Activated naive CD4-positive, alpha-beta T cell treated with anti-CD3 and anti-CD28 coated beads for 36 hours (primary cell): ENCODE measurements at regions of chr11 and their contacts with region 1.

Region 1: GRCh38 chr11:64778508-64779346 is at the start of gene SF1:
- DNase-seq: peak; percentile 100
- H3K4me3 Mint-ChIP-seq: peak within 1 kb of the TSS; percentile 92
- H3K27ac Mint-ChIP-seq: peak within 1 kb of the TSS; percentile 99
- H3K4me1 Mint-ChIP-seq: peaks cover 52% of the 10 kb centered on the region
- H3K27me3 Mint-ChIP-seq: no peaks in the 10 kb centered on the region
- total RNA-seq, gene SF1: 303 to 320 TPM

Region 2: DNA sequence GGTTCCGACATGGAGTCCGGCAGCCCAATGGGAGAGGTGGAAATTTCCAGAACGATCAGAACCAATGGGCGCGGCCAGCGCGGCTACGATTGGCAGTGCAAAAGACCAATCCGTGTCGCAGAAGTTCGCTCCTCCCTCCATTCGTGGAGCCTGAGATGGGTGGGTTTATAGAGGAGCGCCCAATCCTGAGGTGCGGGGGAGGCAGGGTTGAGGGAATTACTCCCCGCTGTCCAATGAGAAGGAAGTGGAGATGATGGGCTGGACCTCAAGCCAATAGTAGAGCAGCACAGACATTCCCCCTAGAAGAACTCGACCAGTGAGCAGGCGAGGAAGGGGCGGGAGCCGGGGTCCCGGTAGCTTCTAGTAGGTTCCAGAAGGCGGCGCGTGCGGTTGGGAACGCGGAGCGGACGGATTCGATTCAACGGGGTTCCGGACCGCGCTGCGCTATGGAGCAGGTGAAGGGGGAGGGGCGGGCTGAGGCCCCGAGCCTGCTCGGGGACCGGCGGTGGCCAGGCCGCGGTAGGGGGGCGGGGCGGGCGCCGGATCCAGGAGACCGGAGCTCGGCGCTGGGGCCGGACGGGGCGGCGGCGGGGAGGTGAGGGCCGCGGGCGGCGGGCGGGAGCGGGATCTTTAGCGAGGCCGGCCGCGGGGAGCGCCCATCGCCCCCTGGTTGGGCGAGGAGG is 592.8 kb before region 1 on chr11 and contains the start of gene STIP1:
- CTCF ChIA-PET with region 1: no interaction called
- intact Hi-C with region 1: loop called (anchors 5 kb)
- DNase-seq: peak; percentile 99
- H3K4me3 Mint-ChIP-seq: no peak within 1 kb of the TSS
- H3K27ac Mint-ChIP-seq: peak within 1 kb of the TSS; percentile 94
- H3K4me1 Mint-ChIP-seq: peaks cover 54% of the 10 kb centered on the region
- H3K27me3 Mint-ChIP-seq: no peaks in the 10 kb centered on the region
- total RNA-seq, gene STIP1: 264 to 272 TPM

Region 3: DNA sequence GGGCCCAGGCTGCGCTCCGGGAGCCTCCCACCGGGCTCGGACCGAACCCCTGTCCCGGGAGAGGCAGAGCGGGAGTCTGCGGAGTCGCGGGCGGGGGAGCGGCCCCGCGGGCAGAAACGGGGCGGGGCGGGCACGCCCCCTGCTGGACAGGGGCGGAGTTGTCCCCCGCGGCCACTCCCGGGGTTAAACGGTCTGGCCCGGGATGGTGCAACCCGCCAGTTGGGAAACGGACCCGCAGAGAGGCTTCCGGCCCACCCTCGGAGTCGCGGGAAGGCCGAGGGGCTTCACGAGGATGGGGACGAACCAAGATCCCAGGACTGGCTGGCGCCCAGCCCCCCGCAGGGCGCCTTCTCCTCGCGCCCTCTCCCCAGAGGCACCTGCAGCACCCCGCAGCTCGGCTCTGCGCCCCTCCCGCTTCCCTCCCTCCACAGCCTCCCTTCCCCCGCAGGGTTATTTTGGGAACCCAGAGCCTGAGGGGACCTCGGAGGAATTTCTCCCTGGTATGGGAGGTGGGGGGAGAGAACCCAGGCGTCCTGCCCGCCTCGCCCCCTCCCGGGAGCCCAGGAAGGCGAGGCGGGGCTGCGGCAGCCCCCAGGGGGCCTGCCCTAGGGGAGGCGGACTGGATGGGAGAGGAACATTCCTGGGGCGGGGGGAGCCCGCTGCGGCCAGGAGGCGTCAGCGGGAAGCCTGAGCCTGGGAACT is 35.7 kb before region 1 on chr11:
- CTCF ChIA-PET with region 1: interaction called, 9 read pairs
- intact Hi-C with region 1: loop called (anchors 2 kb)
- DNase-seq: peak; percentile 77
- H3K4me3 Mint-ChIP-seq: no peak overlapping the region
- H3K27ac Mint-ChIP-seq: no peak overlapping the region
- H3K4me1 Mint-ChIP-seq: peaks cover 26% of the 10 kb centered on the region
- H3K27me3 Mint-ChIP-seq: peaks cover 6% of the 10 kb centered on the region

Region 4: GRCh38 chr11:64757549-64758329 is 21.0 kb before region 1 on chr11:
- CTCF ChIA-PET with region 1: no interaction called
- intact Hi-C with region 1: no loop called
- DNase-seq: no peak
- H3K4me3 Mint-ChIP-seq: no peak overlapping the region
- H3K27ac Mint-ChIP-seq: no peak overlapping the region
- H3K4me1 Mint-ChIP-seq: peaks cover 29% of the 10 kb centered on the region
- H3K27me3 Mint-ChIP-seq: no peaks in the 10 kb centered on the region

Region 5: GRCh38 chr11:64810271-64810890 is 31.7 kb after region 1 on chr11 and contains the start of gene MEN1:
- CTCF ChIA-PET with region 1: interaction called, 3 read pairs
- intact Hi-C with region 1: loop called (anchors 2 kb)
- DNase-seq: peak; percentile 93
- H3K4me3 Mint-ChIP-seq: peak within 1 kb of the TSS; percentile 97
- H3K27ac Mint-ChIP-seq: peak within 1 kb of the TSS; percentile 84
- H3K4me1 Mint-ChIP-seq: peaks cover 20% of the 10 kb centered on the region
- H3K27me3 Mint-ChIP-seq: no peaks in the 10 kb centered on the region
- total RNA-seq, gene MEN1: 23.9 TPM

Region 6: DNA sequence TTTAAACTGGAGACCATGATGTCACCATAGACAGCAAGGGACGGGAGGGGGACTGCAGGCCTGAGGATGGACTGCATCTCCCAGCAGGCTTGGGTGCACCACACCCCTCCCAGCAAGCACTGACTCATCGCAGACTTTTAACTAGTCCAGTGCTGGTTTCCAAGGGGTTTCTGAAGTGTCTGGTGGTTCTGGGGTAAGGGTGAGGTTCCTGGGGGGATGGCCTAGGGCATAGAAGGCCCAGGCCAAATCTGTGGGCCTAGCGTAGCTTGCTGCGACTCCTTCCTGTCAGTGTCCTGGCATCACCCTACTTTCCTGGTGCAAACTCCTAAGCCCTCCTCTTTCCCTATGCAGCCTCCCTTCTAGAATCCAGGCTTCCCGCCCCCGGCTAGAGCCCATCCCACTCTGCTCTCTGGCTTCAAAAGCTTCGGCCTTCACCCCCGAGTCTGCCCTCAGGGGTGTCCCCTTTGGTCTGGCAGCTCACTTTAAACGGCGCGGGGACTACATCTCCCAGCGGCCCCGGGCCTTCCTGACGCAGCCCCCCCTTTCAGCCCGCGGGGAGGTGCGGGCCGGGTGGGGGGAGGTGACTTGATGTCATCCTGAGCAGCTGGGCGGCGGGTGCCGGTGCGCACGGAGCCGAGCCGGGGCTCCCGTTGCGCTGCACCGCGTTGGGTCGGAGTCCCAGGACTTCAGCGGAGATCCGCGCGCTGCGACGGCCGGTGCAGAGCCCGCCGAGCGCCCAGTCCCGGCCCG is 145.6 kb after region 1 on chr11 and contains the start of gene PPP2R5B:
- CTCF ChIA-PET with region 1: no interaction called
- intact Hi-C with region 1: loop called (anchors 2 kb)
- DNase-seq: peak; percentile 92
- H3K4me3 Mint-ChIP-seq: peak within 1 kb of the TSS; percentile 87
- H3K27ac Mint-ChIP-seq: peak within 1 kb of the TSS; percentile 93
- H3K4me1 Mint-ChIP-seq: peaks cover 19% of the 10 kb centered on the region
- H3K27me3 Mint-ChIP-seq: no peaks in the 10 kb centered on the region
- total RNA-seq, gene PPP2R5B: 3.3 to 4.6 TPM

Region 7: DNA sequence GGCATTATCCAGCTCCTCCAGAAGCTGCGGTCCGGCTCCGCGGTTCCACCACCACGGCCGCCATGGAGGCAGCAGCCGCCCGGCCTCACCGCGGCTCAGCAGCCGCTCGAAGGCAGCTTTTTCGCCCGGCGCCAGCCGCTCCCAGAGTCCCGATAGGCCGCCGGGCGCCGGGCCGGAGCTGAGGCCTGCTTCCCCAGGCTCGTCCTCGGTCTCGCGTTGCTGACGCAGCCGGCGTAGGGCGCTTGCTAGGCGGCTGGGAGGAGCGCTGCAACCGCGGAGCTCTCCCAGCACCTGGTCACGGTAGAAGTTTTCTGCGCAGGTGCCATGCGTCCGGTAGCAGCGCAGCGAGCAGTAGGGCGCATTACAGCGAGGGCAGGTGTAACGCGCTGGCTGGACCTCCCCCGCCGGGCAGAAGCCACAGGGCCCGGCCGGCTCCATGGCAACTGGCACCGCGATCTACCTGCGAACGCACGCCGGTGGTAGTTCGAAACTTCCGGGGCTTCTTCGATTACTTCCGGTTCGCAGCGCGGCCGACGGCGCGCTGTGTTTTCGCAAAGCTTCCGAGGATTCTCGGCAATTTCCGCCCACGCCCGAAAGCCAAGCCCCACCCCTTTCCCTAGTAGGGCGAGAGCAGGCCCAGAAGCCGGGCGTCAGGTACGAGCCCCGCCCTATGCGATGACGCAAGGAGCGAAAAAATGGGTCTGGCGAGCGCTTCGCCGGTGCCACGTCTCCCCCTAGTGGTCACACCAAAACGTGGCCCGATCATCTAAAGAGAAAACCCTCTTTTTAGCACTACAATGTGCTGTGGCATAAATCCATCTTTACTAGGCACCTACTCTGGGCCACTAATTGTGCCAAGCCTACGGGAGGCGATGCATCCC is 338.7 kb after region 1 on chr11 and contains the start of gene ZNHIT2:
- CTCF ChIA-PET with region 1: no interaction called
- intact Hi-C with region 1: loop called (anchors 2 kb)
- DNase-seq: peak; percentile 100
- H3K4me3 Mint-ChIP-seq: peak within 1 kb of the TSS; percentile 87
- H3K27ac Mint-ChIP-seq: peak within 1 kb of the TSS; percentile 87
- H3K4me1 Mint-ChIP-seq: peaks cover 66% of the 10 kb centered on the region
- H3K27me3 Mint-ChIP-seq: no peaks in the 10 kb centered on the region
- total RNA-seq, gene ZNHIT2: 5.6 to 6.1 TPM